CD8-positive, alpha-beta memory T cell (primary cell): ENCODE measurements at regions of chr1 and their contacts with region 1.

Region 1: DNA sequence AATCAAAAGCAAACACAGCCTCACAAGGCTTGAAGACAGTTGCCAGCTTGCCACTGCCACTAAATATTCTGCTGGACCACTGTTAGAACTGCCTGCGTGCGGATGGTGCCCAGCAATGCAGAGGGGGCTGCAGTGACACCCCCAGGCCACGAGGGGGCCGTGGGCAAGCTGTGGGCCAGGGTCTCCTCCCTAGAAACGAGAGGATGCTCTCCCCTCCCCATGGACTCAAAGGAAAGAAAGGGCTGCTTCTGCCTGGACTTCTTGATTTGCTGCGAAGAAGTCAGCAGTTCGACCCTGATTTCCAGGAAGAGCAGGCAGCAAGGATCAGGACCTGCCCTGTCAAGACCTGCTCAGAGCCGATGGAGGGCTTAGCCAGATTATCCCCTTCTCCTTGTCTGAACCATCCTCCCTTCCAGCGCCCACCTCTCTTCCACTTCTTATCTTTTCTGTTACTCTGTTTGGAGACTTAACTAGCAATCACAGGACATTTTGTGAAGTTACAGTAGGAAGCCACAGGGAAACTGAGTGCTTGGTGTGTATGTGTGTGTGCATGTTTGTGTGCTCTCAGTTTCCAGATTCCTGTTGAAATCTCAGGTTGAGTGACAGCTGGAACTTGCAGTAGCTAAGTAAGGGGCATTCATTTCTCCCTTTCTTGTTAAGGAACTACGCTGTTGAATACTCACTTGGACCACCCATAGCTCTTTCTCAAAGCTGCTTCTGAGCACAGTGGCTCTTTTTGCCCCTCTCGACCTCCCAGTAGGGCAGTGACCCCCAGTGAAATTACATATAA is 2.7 kb downstream of the MAN1C1 start:
- DNase-seq: peak in 4 of 5 donors; percentile 17 to 62 (median 42)
- H3K4me3 ChIP-seq: peak overlapping the region; percentile 45
- H3K4me3 Mint-ChIP-seq: peak overlapping the region; percentile 78 to 93 (median 88)
- H3K27ac ChIP-seq: no peak overlapping the region
- H3K27ac Mint-ChIP-seq: peak overlapping the region; percentile 80 to 96 (median 88)
- H3K4me1 ChIP-seq: peaks cover 74% of the 10 kb centered on the region
- H3K4me1 Mint-ChIP-seq: peaks cover 77 to 80% (median 78%) of the 10 kb centered on the region in 3 donors
- H3K27me3 ChIP-seq: no peaks in the 10 kb centered on the region
- H3K27me3 Mint-ChIP-seq: peaks cover 0 to 1% of the 10 kb centered on the region in 2 donors

Region 2: GRCh38 chr1:25442178-25442577 is 177.1 kb before region 1 on chr1:
- CTCF ChIA-PET with region 1: no interaction called
- POLR2A ChIA-PET with region 1: no interaction called
- DNase-seq: no peak
- H3K4me3 ChIP-seq: no peak overlapping the region
- H3K4me3 Mint-ChIP-seq: no peak overlapping the region
- H3K27ac ChIP-seq: no peak overlapping the region
- H3K27ac Mint-ChIP-seq: peak overlapping the region in 1 of 8 donors; percentile 2
- H3K4me1 ChIP-seq: no peaks in the 10 kb centered on the region
- H3K4me1 Mint-ChIP-seq: peaks cover 30 to 57% (median 38%) of the 10 kb centered on the region in 3 donors
- H3K27me3 ChIP-seq: no peaks in the 10 kb centered on the region
- H3K27me3 Mint-ChIP-seq: no peaks in the 10 kb centered on the region

Region 3: GRCh38 chr1:25594971-25595370 is 24.3 kb before region 1 on chr1:
- CTCF ChIA-PET with region 1: no interaction called
- POLR2A ChIA-PET with region 1: no interaction called
- DNase-seq: no peak
- H3K4me3 ChIP-seq: no peak overlapping the region
- H3K4me3 Mint-ChIP-seq: no peak overlapping the region
- H3K27ac ChIP-seq: no peak overlapping the region
- H3K27ac Mint-ChIP-seq: peak overlapping the region in 1 of 8 donors; percentile 1
- H3K4me1 ChIP-seq: peaks cover 7% of the 10 kb centered on the region
- H3K4me1 Mint-ChIP-seq: peaks cover 7 to 10% (median 8%) of the 10 kb centered on the region in 3 donors
- H3K27me3 ChIP-seq: no peaks in the 10 kb centered on the region
- H3K27me3 Mint-ChIP-seq: no peaks in the 10 kb centered on the region

Region 4: GRCh38 chr1:25608488-25609178 is 10.7 kb before region 1 on chr1:
- CTCF ChIA-PET with region 1: interaction called, 17 read pairs
- POLR2A ChIA-PET with region 1: interaction called, 3 read pairs
- DNase-seq: peak; percentile 79 to 89 (median 82)
- H3K4me3 ChIP-seq: peak overlapping the region; percentile 45
- H3K4me3 Mint-ChIP-seq: peak overlapping the region in 5 of 7 donors; percentile 2 to 63 (median 25)
- H3K27ac ChIP-seq: no peak overlapping the region
- H3K27ac Mint-ChIP-seq: peak overlapping the region in 4 of 8 donors; percentile 3 to 21 (median 10)
- H3K4me1 ChIP-seq: no peaks in the 10 kb centered on the region
- H3K4me1 Mint-ChIP-seq: peaks cover 4 to 21% (median 19%) of the 10 kb centered on the region in 3 donors
- H3K27me3 ChIP-seq: no peaks in the 10 kb centered on the region
- H3K27me3 Mint-ChIP-seq: peaks cover 4 to 5% of the 10 kb centered on the region in 2 donors

Region 5: DNA sequence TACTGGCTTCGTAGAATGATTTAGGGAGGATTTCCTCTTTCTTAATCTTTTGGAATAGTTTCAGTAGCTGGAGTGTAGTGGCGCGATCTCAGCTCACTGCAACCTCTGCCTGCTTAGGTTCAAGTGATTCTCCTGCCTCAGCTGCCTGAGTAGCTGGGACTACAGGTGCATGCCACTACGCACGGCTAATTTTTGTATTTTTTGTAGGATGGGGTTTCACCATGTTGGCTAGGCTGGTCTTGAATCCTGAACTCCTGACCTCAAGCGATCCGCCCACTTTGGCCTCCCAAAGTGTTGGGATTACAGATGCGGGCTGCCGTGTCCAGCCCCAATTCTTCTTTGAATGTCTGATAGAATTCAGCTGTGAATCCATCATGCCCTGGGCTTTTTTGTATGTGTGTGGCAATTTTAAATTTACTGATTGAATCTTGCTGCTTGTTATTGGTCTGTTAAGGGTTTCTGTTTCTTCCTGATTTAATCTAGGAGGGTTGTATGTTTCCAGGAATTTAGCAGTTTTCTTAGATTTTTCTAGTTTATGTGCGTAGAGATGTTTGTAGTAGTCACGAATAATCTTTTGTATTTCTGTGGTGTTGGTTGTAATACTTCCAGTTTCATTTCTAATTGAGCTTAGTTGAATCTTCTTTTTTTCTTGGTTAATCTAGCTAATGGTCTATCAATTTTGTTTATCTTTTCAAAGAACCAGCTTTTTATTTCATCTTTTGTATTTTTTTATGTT is 12.6 kb after region 1 on chr1:
- CTCF ChIA-PET with region 1: interaction called, 6 read pairs
- POLR2A ChIA-PET with region 1: interaction called, 11 read pairs
- DNase-seq: no peak
- H3K4me3 ChIP-seq: peak overlapping the region; percentile 28
- H3K4me3 Mint-ChIP-seq: peak overlapping the region; percentile 67 to 86 (median 78)
- H3K27ac ChIP-seq: no peak overlapping the region
- H3K27ac Mint-ChIP-seq: peak overlapping the region; percentile 51 to 96 (median 90)
- H3K4me1 ChIP-seq: peaks cover 57% of the 10 kb centered on the region
- H3K4me1 Mint-ChIP-seq: peaks cover 40 to 64% (median 57%) of the 10 kb centered on the region in 3 donors
- H3K27me3 ChIP-seq: no peaks in the 10 kb centered on the region
- H3K27me3 Mint-ChIP-seq: no peaks in the 10 kb centered on the region

Region 6: DNA sequence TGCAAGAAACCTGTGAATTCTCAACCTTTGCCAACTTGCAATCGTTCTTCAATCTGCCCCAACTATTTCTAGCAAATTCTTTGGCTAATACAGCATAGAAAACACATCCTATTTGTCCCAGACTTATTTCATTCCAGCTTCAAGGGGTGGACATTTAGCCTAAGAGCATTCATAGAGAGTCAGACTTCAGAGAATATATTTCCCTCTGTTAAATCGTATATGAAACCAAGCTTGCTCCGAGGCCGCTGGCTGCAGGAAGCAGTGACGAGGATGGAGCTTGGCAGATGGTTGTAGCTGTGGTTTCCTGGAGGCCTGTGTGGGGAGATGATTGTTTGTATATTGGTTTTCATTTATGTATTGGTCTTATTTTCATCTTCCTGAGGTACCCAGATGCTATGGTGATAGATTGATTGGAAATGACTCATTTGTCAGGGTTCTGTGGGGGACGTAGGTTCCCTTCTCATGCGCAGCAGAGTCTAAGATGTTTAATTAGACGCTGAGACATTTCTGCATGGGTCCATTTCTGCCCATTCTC is 23.3 kb after region 1 on chr1:
- CTCF ChIA-PET with region 1: interaction called, 22 read pairs
- POLR2A ChIA-PET with region 1: interaction called, 8 read pairs
- DNase-seq: peak; percentile 50 to 86 (median 82)
- H3K4me3 ChIP-seq: peak overlapping the region; percentile 51
- H3K4me3 Mint-ChIP-seq: peak overlapping the region; percentile 38 to 73 (median 66)
- H3K27ac ChIP-seq: peak overlapping the region; percentile 22
- H3K27ac Mint-ChIP-seq: peak overlapping the region; percentile 41 to 95 (median 93)
- H3K4me1 ChIP-seq: peaks cover 70% of the 10 kb centered on the region
- H3K4me1 Mint-ChIP-seq: peaks cover 39 to 73% (median 62%) of the 10 kb centered on the region in 3 donors
- H3K27me3 ChIP-seq: no peaks in the 10 kb centered on the region
- H3K27me3 Mint-ChIP-seq: no peaks in the 10 kb centered on the region

Region 7: GRCh38 chr1:25675729-25676476 is 56.6 kb after region 1 on chr1:
- CTCF ChIA-PET with region 1: interaction called, 10 read pairs
- POLR2A ChIA-PET with region 1: interaction called, 7 read pairs
- DNase-seq: peak; percentile 50 to 91 (median 80)
- H3K4me3 ChIP-seq: peak overlapping the region; percentile 50
- H3K4me3 Mint-ChIP-seq: peak overlapping the region; percentile 58 to 89 (median 82)
- H3K27ac ChIP-seq: no peak overlapping the region
- H3K27ac Mint-ChIP-seq: peak overlapping the region; percentile 55 to 96 (median 85)
- H3K4me1 ChIP-seq: peaks cover 76% of the 10 kb centered on the region
- H3K4me1 Mint-ChIP-seq: peaks cover 62 to 80% (median 69%) of the 10 kb centered on the region in 3 donors
- H3K27me3 ChIP-seq: no peaks in the 10 kb centered on the region
- H3K27me3 Mint-ChIP-seq: peaks cover 0 to 1% of the 10 kb centered on the region in 2 donors

Region 8: GRCh38 chr1:25796811-25797458 is 177.6 kb after region 1 on chr1:
- CTCF ChIA-PET with region 1: interaction called, 14 read pairs
- POLR2A ChIA-PET with region 1: interaction called, 5 read pairs
- DNase-seq: peak; percentile 71 to 87 (median 75)
- H3K4me3 ChIP-seq: peak overlapping the region; percentile 42
- H3K4me3 Mint-ChIP-seq: peak overlapping the region; percentile 59 to 81 (median 71)
- H3K27ac ChIP-seq: peak overlapping the region; percentile 3
- H3K27ac Mint-ChIP-seq: peak overlapping the region; percentile 73 to 95 (median 90)
- H3K4me1 ChIP-seq: peaks cover 55% of the 10 kb centered on the region
- H3K4me1 Mint-ChIP-seq: peaks cover 35 to 57% (median 41%) of the 10 kb centered on the region in 3 donors
- H3K27me3 ChIP-seq: no peaks in the 10 kb centered on the region
- H3K27me3 Mint-ChIP-seq: peaks cover 0 to 3% of the 10 kb centered on the region in 2 donors